ENCODE measurements at regions of chr12 and their contacts with region 1.

Region 1: GRCh38 chr12:51025836-51026638 is at the start of gene SLC11A2:
- DNase-seq: peak; percentile 96
- H3K4me3 Mint-ChIP-seq: peak within 1 kb of the TSS; percentile 98
- H3K27ac Mint-ChIP-seq: peak within 1 kb of the TSS; percentile 97
- H3K4me1 Mint-ChIP-seq: peaks cover 58% of the 10 kb centered on the region
- H3K27me3 Mint-ChIP-seq: peaks cover 18% of the 10 kb centered on the region

Region 2: DNA sequence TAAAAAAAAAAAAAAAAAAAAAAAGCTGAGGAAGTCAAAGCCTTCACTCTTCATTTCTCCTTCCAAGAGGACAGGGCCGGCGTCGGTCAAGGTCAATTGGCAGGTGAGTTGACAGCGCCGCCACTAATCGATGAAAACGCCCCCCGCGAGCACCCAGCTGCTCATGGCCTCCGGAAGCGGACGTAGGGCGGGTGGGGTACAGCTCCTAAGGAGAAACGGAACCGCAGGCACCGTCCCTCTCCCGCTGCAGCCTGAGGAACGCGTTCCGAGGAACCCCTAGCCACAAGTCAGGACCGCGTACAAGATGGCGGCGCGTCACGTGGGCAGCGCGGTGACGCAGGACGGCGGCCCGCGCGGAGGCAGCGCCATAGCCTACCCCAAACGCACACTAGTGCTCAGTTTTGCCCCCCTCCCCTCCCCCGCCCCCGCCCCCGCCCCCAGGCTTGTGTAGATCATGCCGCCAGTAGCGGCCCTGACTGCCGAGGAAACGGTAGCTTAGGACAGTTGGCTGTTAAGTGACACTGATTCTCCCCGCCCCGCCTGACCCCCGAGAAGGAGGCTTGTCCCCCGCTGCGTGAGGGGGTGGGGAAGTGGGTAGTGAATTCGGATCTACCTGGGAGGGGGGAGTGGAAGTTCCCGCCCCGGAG is 262.3 kb before region 1 on chr12 and contains the start of gene ATF1:
- CTCF ChIA-PET with region 1: interaction called, 11 read pairs
- DNase-seq: peak; percentile 92
- H3K4me3 Mint-ChIP-seq: peak within 1 kb of the TSS; percentile 91
- H3K27ac Mint-ChIP-seq: peak within 1 kb of the TSS; percentile 97
- H3K4me1 Mint-ChIP-seq: peaks cover 45% of the 10 kb centered on the region
- H3K27me3 Mint-ChIP-seq: peaks cover 5% of the 10 kb centered on the region

Region 3: DNA sequence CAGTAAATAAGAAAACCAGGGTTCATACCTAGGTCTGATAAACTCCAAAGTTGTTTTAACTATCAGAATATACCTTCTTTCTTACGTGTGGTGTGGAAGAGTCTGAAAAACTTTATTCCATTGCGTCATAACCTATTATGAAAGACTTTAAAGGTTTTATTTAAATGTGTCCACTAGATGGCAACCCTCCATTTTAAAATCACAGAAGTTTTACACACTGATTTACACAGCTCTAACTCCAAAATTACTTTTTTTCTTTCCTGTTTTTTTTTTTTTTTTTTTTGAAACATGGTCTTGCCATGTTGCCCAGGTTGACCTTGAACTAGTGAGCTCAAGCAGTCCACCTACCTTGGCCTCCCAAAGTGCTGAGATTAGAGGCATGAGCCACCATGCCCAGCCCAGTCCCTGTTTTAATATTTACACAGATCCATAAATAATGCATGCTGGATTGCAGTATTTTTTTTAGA is 200.6 kb before region 1 on chr12:
- CTCF ChIA-PET with region 1: interaction called, 26 read pairs
- DNase-seq: no peak
- H3K4me3 Mint-ChIP-seq: no peak overlapping the region
- H3K27ac Mint-ChIP-seq: peak overlapping the region; percentile 54
- H3K4me1 Mint-ChIP-seq: peaks cover 5% of the 10 kb centered on the region
- H3K27me3 Mint-ChIP-seq: peaks cover 11% of the 10 kb centered on the region

Region 4: DNA sequence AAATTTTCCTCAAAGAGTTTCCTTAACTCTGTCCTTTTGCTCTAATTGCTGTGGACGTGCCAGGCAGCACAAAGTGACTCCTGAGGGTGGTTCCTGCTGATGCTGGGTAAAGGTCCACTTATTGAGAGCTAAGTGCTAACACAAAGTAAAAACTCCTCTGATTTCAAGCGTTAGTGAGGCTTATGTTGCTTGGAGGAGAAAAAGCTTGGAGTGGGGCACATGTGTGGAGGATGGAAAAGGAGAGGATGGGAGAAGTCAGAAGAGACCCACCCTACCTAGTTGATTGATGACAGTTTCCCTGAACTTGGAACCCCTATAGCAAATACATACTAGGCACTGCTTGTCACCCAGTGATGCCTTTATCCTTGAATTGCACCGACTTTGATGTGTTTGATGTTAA is 10.2 kb after region 1 on chr12:
- CTCF ChIA-PET with region 1: no interaction called
- DNase-seq: no peak
- H3K4me3 Mint-ChIP-seq: no peak overlapping the region
- H3K27ac Mint-ChIP-seq: no peak overlapping the region
- H3K4me1 Mint-ChIP-seq: no peaks in the 10 kb centered on the region
- H3K27me3 Mint-ChIP-seq: peaks cover 9% of the 10 kb centered on the region

Region 5: GRCh38 chr12:51351913-51352532 is 326.0 kb after region 1 on chr12:
- CTCF ChIA-PET with region 1: interaction called, 10 read pairs
- DNase-seq: peak; percentile 66
- H3K4me3 Mint-ChIP-seq: no peak overlapping the region
- H3K27ac Mint-ChIP-seq: no peak overlapping the region
- H3K4me1 Mint-ChIP-seq: no peaks in the 10 kb centered on the region
- H3K27me3 Mint-ChIP-seq: peaks cover 22% of the 10 kb centered on the region

Measured in activated naive CD4-positive, alpha-beta T cell treated with anti-CD3 and anti-CD28 coated beads, Interleukin-2, amount 10 ng/mL, durations not matched to agents 7 days and 5 days (primary cell).